Activated CD4-positive, alpha-beta T cell treated with anti-CD3 and anti-CD28 coated beads, Interleukin-2, amount 10 ng/mL, durations not matched to agents 24 days and 14 days (primary cell): ENCODE measurements at regions of chr3 and their contacts with region 1.

Region 1: DNA sequence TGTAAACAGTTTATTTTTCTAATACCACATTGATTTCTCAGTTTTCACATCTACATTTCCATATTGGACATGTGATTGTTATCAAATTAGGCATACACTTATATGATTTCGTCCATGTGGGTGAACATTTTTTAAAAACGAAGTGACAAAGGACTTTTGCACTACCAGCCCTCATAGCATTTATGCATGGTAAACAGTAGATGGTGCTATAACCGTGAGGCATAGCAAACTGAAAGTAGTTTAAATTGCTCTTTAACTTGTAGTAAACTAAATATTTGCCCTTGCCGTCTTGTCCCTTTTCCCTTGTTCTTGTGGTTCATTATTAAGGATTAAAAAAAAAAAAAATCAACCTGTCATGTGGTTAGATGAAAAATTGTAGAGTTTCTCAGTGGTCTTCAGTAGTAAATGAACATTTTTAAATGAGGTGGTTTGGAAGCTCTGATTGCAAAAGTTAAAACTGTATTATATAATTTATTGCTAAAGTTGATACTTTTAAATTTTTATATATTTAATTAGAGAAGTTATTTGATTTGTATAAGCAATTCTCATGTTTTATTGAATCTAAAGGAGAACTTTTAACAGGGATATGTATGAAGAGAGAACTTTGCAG is 24.0 kb downstream of the STX19 start:
- DNase-seq: peak; percentile 75
- H3K4me3 Mint-ChIP-seq: peak overlapping the region; percentile 67
- H3K27ac Mint-ChIP-seq: no peak overlapping the region
- H3K4me1 Mint-ChIP-seq: peaks cover 16% of the 10 kb centered on the region
- H3K27me3 Mint-ChIP-seq: no peaks in the 10 kb centered on the region

Region 2: GRCh38 chr3:93931597-93932229 is 72.7 kb before region 1 on chr3:
- intact Hi-C with region 1: no loop called
- DNase-seq: no peak
- H3K4me3 Mint-ChIP-seq: no peak overlapping the region
- H3K27ac Mint-ChIP-seq: no peak overlapping the region
- H3K4me1 Mint-ChIP-seq: no peaks in the 10 kb centered on the region
- H3K27me3 Mint-ChIP-seq: no peaks in the 10 kb centered on the region

Region 3: DNA sequence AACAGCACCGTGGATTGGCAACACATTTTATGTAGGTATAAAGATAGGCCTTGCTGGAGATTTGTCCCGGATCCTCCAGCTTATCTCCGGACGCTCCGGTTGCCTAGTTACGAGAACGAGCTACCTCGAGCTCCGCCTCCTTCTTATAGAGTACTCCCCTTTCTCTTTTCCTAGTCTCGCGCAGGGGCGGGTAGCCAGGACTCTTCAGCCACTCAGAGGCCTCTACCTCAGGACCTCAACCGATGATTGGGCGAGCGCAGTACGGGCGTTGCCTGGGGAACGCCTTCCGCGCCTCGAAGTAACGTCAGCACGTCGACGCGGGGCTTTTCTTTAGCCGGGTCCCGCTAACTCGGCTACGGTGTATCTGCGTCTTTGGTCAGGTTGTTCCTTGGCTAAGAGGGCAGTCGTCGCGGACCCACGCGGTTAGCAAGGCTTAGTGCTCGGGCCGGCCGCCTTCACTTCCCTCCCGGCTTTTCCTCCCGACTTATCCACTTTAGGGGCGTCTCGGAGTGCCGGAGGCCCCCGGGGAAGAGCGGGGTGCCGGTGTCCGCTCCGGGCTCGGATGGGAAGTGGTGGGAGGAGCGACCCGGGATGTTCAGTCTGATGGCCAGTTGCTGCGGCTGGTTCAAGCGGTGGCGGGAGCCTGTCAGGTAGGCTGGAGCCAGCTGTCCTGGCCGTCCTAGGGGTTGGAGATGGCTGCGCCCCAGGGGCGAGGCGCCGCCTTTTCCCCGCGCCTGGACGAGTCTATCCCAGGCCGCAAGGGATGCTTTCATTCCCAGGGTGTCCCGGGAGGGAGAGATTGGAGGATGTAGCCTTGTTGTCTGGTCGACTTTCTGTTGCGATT is 24.4 kb before region 1 on chr3 and contains the start of gene ARL13B:
- intact Hi-C with region 1: loop called (anchors 2 kb)
- DNase-seq: peak; percentile 98
- H3K4me3 Mint-ChIP-seq: peak within 1 kb of the TSS; percentile 90
- H3K27ac Mint-ChIP-seq: peak within 1 kb of the TSS; percentile 91
- H3K4me1 Mint-ChIP-seq: peaks cover 19% of the 10 kb centered on the region
- H3K27me3 Mint-ChIP-seq: no peaks in the 10 kb centered on the region
- total RNA-seq, gene ARL13B: 12.2 and 16.6 TPM in 2 replicates

Region 4: GRCh38 chr3:94069194-94069813 is 64.9 kb after region 1 on chr3:
- intact Hi-C with region 1: loop called (anchors 1 kb)
- DNase-seq: no peak
- H3K4me3 Mint-ChIP-seq: no peak overlapping the region
- H3K27ac Mint-ChIP-seq: peak overlapping the region; percentile 39
- H3K4me1 Mint-ChIP-seq: peaks cover 57% of the 10 kb centered on the region
- H3K27me3 Mint-ChIP-seq: no peaks in the 10 kb centered on the region

Region 5: GRCh38 chr3:94249585-94249984 is 245.2 kb after region 1 on chr3:
- intact Hi-C with region 1: loop called (anchors 2 kb)
- DNase-seq: peak; percentile 88
- H3K4me3 Mint-ChIP-seq: no peak overlapping the region
- H3K27ac Mint-ChIP-seq: no peak overlapping the region
- H3K4me1 Mint-ChIP-seq: no peaks in the 10 kb centered on the region
- H3K27me3 Mint-ChIP-seq: no peaks in the 10 kb centered on the region